ENCODE measurements at regions of chr10 and their contacts with region 1.

Region 1: GRCh38 chr10:32980558-32981468 is 22.8 kb upstream of the ITGB1 start:
- DNase-seq: peak; percentile 91
- ATAC-seq: peak; percentile 97
- H3K4me3 Mint-ChIP-seq: peak overlapping the region; percentile 79
- H3K27ac Mint-ChIP-seq: peak overlapping the region; percentile 90
- H3K4me1 Mint-ChIP-seq: peaks cover 27% of the 10 kb centered on the region
- H3K27me3 Mint-ChIP-seq: no peaks in the 10 kb centered on the region
- CTCF ChIP-seq: no peak

Region 2: DNA sequence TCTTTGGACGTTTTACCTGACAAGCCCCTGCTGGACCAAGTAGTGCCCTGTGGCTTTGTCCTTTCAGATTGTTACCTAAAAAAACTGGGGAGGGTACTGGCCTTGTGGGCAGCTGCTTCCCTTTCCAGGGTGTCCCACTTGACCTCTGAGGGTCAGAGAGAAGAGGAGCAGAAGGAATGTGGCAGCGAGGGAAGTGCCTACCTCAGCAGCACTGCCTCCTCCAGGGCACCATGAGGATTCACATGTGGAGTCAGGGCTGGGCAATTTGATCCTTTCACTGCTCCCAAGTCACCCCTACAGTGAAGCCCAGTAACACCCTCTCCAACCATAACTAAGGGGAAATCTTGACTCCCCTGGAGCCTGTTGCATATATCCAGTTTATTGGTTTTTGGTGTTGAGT is 87.4 kb before region 1 on chr10:
- CTCF ChIA-PET with region 1: no interaction called
- POLR2A ChIA-PET with region 1: no interaction called
- intact Hi-C with region 1: no loop called
- DNase-seq: no peak
- ATAC-seq: no peak
- H3K4me3 Mint-ChIP-seq: no peak overlapping the region
- H3K27ac Mint-ChIP-seq: no peak overlapping the region
- H3K4me1 Mint-ChIP-seq: peaks cover 5% of the 10 kb centered on the region
- H3K27me3 Mint-ChIP-seq: no peaks in the 10 kb centered on the region
- CTCF ChIP-seq: no peak

Region 3: GRCh38 chr10:32958085-32959005 is 22.5 kb before region 1 on chr10 and contains the start of gene ITGB1:
- CTCF ChIA-PET with region 1: interaction called, 8 read pairs
- POLR2A ChIA-PET with region 1: interaction called, 11 read pairs
- intact Hi-C with region 1: no loop called
- DNase-seq: peak; percentile 82
- ATAC-seq: peak; percentile 89
- H3K4me3 Mint-ChIP-seq: peak within 1 kb of the TSS; percentile 86
- H3K27ac Mint-ChIP-seq: peak within 1 kb of the TSS; percentile 92
- H3K4me1 Mint-ChIP-seq: peaks cover 51% of the 10 kb centered on the region
- H3K27me3 Mint-ChIP-seq: no peaks in the 10 kb centered on the region
- CTCF ChIP-seq: no peak
- total RNA-seq, gene ITGB1: 45.1 to 45.4 TPM